ENCODE measurements at regions of chr10 and their contacts with region 1.

Region 1: GRCh38 chr10:101602761-101603398 is 14.8 kb downstream of the DPCD start:
- DNase-seq: peak; percentile 83
- ATAC-seq: peak; percentile 98
- H3K4me3 Mint-ChIP-seq: no peak overlapping the region
- H3K27ac Mint-ChIP-seq: no peak overlapping the region
- H3K4me1 Mint-ChIP-seq: no peaks in the 10 kb centered on the region
- H3K27me3 Mint-ChIP-seq: no peaks in the 10 kb centered on the region

Region 2: GRCh38 chr10:101529725-101530553 is 72.9 kb before region 1 on chr10:
- CTCF ChIA-PET with region 1: no interaction called
- DNase-seq: no peak
- ATAC-seq: no peak
- H3K4me3 Mint-ChIP-seq: no peak overlapping the region
- H3K27ac Mint-ChIP-seq: no peak overlapping the region
- H3K4me1 Mint-ChIP-seq: no peaks in the 10 kb centered on the region
- H3K27me3 Mint-ChIP-seq: no peaks in the 10 kb centered on the region

Region 3: GRCh38 chr10:101587725-101588653 is 14.9 kb before region 1 on chr10 and contains the starts of genes DPCD and POLL:
- CTCF ChIA-PET with region 1: interaction called, 36 read pairs
- DNase-seq: peak; percentile 97
- ATAC-seq: peak; percentile 97
- H3K4me3 Mint-ChIP-seq: peak within 1 kb of the TSS; percentile 93
- H3K27ac Mint-ChIP-seq: peak within 1 kb of the TSS; percentile 81
- H3K4me1 Mint-ChIP-seq: peaks cover 18% of the 10 kb centered on the region
- H3K27me3 Mint-ChIP-seq: no peaks in the 10 kb centered on the region
- total RNA-seq, gene DPCD: 3.7 to 4.2 TPM
- total RNA-seq, gene POLL: 30.5 to 34.1 TPM

Region 4: DNA sequence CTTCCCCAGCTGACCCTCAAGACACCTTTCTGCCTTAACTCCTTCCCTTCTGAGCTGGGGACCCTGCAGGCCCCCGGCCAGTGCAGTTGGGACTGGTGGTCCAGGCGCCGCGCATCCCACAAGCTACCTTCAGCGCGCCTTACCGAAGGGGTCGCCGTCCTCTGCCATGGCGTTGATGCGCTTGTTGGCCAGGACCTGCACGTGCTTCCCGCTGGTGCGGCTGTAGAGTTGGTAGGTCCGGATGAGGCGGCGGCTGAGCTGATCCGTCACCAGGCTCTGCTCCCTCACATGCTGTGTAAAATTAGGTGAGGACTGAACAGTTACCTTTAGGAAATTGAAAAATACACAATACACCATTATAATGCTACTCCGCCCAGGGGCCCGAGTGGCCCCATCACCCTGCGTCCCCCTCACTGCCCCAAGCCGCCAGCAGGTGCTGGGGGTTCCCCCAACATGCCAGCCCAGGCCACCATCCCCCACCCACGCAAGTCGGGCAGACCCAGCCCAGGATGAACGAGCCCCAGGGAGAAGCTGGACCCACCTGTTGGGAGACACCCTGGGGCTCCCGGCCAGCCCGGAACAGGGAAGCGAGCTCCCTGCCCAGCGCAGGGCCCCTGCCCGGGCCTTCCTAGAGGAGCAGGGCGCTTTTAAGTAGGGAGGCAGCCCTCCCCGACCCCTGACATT is 171.9 kb after region 1 on chr10:
- CTCF ChIA-PET with region 1: interaction called, 198 read pairs
- DNase-seq: no peak
- ATAC-seq: no peak
- H3K4me3 Mint-ChIP-seq: no peak overlapping the region
- H3K27ac Mint-ChIP-seq: no peak overlapping the region
- H3K4me1 Mint-ChIP-seq: peaks cover 12% of the 10 kb centered on the region
- H3K27me3 Mint-ChIP-seq: peaks cover 69% of the 10 kb centered on the region